ENCODE measurements at regions of chr10 and their contacts with region 1.

Region 1: GRCh38 chr10:71708301-71708703 is 11.3 kb downstream of the C10orf105 start:
- DNase-seq: peak; percentile 62
- H3K4me3 ChIP-seq: no peak overlapping the region
- H3K27ac ChIP-seq: no peak overlapping the region
- H3K4me1 ChIP-seq: peaks cover 6 to 14% (median 7%) of the 10 kb centered on the region in 4 donors
- H3K27me3 ChIP-seq: no peaks in the 10 kb centered on the region
- CTCF ChIP-seq: peak; percentile 78 to 91 (median 81)
- EP300 ChIP-seq: no peak
- POLR2A ChIP-seq: no peak

Region 2: DNA sequence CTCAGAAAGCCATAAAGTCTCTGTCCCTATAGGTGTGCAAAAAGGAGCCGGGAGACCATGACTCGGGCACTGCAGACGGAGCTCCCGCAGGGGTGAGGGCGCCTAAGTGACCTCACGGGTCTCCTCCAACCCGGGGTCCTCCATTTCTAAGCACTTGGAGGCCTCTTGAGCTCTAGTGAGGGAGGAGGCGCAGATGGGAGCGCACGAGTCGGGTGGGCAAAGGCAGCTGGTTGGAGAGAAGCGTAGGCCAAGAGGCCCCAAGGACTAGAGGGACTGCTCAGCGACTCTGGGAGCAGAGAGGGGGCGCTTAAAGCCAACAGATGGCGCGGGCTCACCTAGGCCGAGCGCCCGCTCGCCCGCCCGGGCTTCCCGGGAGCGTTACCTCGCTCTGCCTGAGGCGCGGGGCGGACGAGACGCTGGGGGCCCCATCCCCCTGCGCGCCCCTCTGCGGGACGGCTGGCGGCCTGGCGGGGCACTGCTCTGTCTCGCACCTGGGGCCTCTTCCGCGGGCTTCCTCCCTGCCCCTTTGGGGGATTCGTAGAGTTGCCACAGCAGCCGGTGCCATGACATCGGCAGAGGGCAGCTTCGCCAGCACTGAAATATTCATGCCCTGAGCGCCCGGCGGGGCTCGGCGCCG is 312.1 kb before region 1 on chr10:
- in situ Hi-C with region 1: loop called in 2 of 4 experiments (anchors 25 kb)
- intact Hi-C with region 1: loop called (anchors 10 kb)
- DNase-seq: peak; percentile 42
- H3K4me3 ChIP-seq: peak overlapping the region; percentile 34 to 50 (median 47)
- H3K27ac ChIP-seq: peak overlapping the region in 2 of 4 donors; percentile 21 to 53
- H3K4me1 ChIP-seq: peaks cover 10 to 19% (median 15%) of the 10 kb centered on the region in 4 donors
- H3K27me3 ChIP-seq: peaks cover 68% of the 10 kb centered on the region
- CTCF ChIP-seq: peak; percentile 20 to 35 (median 28)
- EP300 ChIP-seq: no peak
- POLR2A ChIP-seq: no peak

Region 3: GRCh38 chr10:71684356-71685173 is 23.7 kb before region 1 on chr10:
- in situ Hi-C with region 1: no loop called
- intact Hi-C with region 1: no loop called
- DNase-seq: peak; percentile 34
- H3K4me3 ChIP-seq: no peak overlapping the region
- H3K27ac ChIP-seq: no peak overlapping the region
- H3K4me1 ChIP-seq: no peaks in the 10 kb centered on the region
- H3K27me3 ChIP-seq: no peaks in the 10 kb centered on the region
- CTCF ChIP-seq: peak in 2 of 5 experiments; percentile 7 to 21
- EP300 ChIP-seq: no peak
- POLR2A ChIP-seq: no peak

Region 4: DNA sequence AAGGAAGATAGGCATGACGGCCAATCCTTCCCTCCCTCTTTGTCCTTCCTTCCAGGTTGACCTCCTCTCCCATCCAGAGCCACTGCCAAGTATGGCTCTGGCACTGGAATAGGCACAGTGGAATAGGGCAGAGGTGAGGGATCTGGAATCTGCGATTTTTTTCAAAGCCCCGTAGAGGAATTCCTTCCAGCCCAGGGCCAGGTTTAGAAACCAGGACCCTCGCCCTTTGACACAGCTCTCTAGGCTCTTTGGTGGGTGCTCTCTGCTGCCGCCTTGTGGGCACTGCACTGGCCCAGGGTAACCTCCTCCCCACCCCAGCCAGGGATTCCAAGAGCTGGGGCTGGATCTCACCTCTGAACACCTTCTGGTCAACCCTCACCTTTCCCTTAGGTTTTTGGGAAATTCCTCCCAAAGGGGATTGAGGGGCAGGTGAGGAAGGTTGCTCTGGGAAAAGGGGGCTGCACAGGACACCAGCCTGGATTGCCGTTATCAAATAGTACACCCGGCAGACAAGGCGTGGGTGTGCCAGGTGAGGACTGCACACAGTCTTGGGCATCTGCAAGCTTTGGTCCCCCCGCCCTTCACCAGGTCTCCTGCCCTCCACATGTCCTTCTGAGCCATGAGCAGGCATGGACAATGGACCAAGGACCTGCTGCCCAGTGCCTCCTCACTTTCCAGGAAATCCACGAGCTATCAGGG is 11.5 kb before region 1 on chr10:
- in situ Hi-C with region 1: no loop called
- intact Hi-C with region 1: no loop called
- DNase-seq: peak; percentile 80
- H3K4me3 ChIP-seq: no peak overlapping the region
- H3K27ac ChIP-seq: no peak overlapping the region
- H3K4me1 ChIP-seq: peaks cover 4 to 6% (median 5%) of the 10 kb centered on the region in 4 donors
- H3K27me3 ChIP-seq: no peaks in the 10 kb centered on the region
- CTCF ChIP-seq: peak; percentile 86 to 90 (median 88)
- EP300 ChIP-seq: no peak
- POLR2A ChIP-seq: no peak

Region 5: GRCh38 chr10:71812016-71812912 is 104.0 kb after region 1 on chr10:
- in situ Hi-C with region 1: loop called in 1 of 4 experiments (anchors 25 kb)
- intact Hi-C with region 1: no loop called
- DNase-seq: peak; percentile 78
- H3K4me3 ChIP-seq: no peak overlapping the region
- H3K27ac ChIP-seq: no peak overlapping the region
- H3K4me1 ChIP-seq: peaks cover 0 to 4% (median 0%) of the 10 kb centered on the region in 4 donors
- H3K27me3 ChIP-seq: no peaks in the 10 kb centered on the region
- CTCF ChIP-seq: peak; percentile 86 to 93 (median 91)
- EP300 ChIP-seq: no peak
- POLR2A ChIP-seq: no peak

Region 6: GRCh38 chr10:72133517-72133916 is 425.2 kb after region 1 on chr10:
- in situ Hi-C with region 1: no loop called
- intact Hi-C with region 1: no loop called
- DNase-seq: no peak
- H3K4me3 ChIP-seq: no peak overlapping the region
- H3K27ac ChIP-seq: no peak overlapping the region
- H3K4me1 ChIP-seq: peaks cover 0 to 3% (median 0%) of the 10 kb centered on the region in 4 donors
- H3K27me3 ChIP-seq: no peaks in the 10 kb centered on the region
- CTCF ChIP-seq: no peak
- EP300 ChIP-seq: no peak
- POLR2A ChIP-seq: no peak